ENCODE measurements at regions of chr5 and their contacts with region 1.

Region 1: DNA sequence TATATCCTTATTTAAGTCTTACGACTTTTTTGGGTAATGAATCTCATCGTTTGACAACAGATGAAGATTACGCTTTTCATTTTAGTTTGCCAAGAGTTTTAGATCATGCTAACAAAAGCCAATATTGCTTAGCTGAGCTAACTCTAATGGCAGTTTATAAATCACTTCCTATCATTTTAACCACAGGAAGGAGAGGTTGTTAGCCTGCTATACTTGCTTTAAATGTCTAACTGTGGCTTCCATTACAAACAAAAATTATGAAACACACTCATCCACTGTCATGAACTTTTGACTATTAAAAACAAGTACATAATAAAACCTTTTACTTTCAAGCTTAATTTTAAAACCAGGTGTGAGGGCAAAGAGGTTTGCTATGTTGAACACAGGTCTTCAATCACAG is 53.7 kb upstream of the ANKH start:
- DNase-seq: no peak
- H3K4me3 ChIP-seq: no peak overlapping the region
- H3K27ac ChIP-seq: no peak overlapping the region
- H3K4me1 ChIP-seq: no peaks in the 10 kb centered on the region
- H3K27me3 ChIP-seq: no peaks in the 10 kb centered on the region
- CTCF ChIP-seq: no peak

Region 2: GRCh38 chr5:14959443-14960119 is 34.3 kb after region 1 on chr5:
- CTCF ChIA-PET with region 1: no interaction called
- POLR2A ChIA-PET with region 1: no interaction called
- intact Hi-C with region 1: no loop called
- DNase-seq: peak; percentile 69 to 89
- H3K4me3 ChIP-seq: no peak overlapping the region
- H3K27ac ChIP-seq: no peak overlapping the region
- H3K4me1 ChIP-seq: peaks cover 8% of the 10 kb centered on the region; the same call in 1 of the 2 replicates
- H3K27me3 ChIP-seq: peaks cover 4% of the 10 kb centered on the region; the same call in 1 of the 2 replicates
- CTCF ChIP-seq: no peak

Region 3: GRCh38 chr5:16321284-16321683 is 1396.0 kb after region 1 on chr5:
- CTCF ChIA-PET with region 1: no interaction called
- POLR2A ChIA-PET with region 1: interaction called, 18 read pairs
- intact Hi-C with region 1: no loop called
- DNase-seq: no peak
- H3K4me3 ChIP-seq: no peak overlapping the region
- H3K27ac ChIP-seq: no peak overlapping the region
- H3K4me1 ChIP-seq: no peaks in the 10 kb centered on the region
- H3K27me3 ChIP-seq: peaks cover 16% of the 10 kb centered on the region; the same call in 1 of the 2 replicates
- CTCF ChIP-seq: no peak